ENCODE measurements at regions of chr3 and their contacts with region 1.

Region 1: GRCh38 chr3:98154686-98155085 is 7.4 kb downstream of the OR5H14 start:
- DNase-seq: no peak
- ATAC-seq: no peak

Region 2: GRCh38 chr3:97530689-97531088 is 624.0 kb before region 1 on chr3:
- intact Hi-C with region 1: no loop called
- DNase-seq: no peak
- ATAC-seq: no peak

Region 3: GRCh38 chr3:98199020-98199419 is 44.3 kb after region 1 on chr3:
- intact Hi-C with region 1: no loop called
- DNase-seq: no peak
- ATAC-seq: no peak

Region 4: GRCh38 chr3:98209244-98209643 is 54.6 kb after region 1 on chr3:
- intact Hi-C with region 1: loop called (anchors 1 kb)
- DNase-seq: no peak
- ATAC-seq: no peak